HEK293T (cell line): ENCODE measurements at regions of chr17 and their contacts with region 1.

Region 1: GRCh38 chr17:40086150-40087044 is 14.0 kb downstream of the NR1D1 start:
- DNase-seq: peak; percentile 73

Region 2: DNA sequence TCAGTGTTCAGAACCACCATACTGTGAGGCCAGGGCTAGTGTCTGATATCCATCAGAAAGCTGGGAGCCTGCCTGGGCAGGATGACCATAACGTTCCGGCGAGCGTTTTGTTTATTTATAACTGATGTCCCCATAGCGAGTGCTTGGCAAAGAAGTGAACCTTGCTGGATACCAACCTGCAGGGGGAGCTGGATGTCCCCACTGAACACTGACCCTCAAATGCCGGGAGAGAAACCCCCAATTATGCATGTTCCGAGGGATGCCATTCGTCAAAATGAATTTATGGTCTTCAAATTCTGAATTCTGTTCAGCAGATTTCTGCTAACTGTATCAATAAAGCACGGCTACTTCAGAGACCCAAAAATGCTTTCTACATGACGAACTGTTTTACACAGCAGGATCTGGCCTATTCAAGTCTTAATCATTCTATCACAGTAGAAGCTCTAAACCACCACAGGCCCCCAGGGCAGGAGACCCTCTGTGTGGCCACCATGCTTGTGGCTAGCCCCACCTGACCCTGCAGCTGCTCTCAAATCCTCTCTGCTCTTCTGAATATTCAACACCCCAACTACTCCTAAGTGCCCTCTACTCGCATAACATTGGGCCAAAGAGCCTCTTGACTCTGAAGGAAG is 47.4 kb before region 1 on chr17:
- CTCF ChIA-PET with region 1: interaction called, 15 read pairs
- POLR2A ChIA-PET with region 1: interaction called, 6 read pairs
- DNase-seq: peak; percentile 28

Region 3: GRCh38 chr17:40098846-40099618 is 12.6 kb after region 1 on chr17:
- CTCF ChIA-PET with region 1: interaction called, 10 read pairs
- POLR2A ChIA-PET with region 1: interaction called, 3 read pairs
- DNase-seq: peak; percentile 80